Right lobe of liver (tissue), 6 donors: ENCODE measurements at regions of chr21 and their contacts with region 1.

Region 1: GRCh38 chr21:14686466-14687267 is 140.6 kb upstream of the SAMSN1 start:
- DNase-seq: no peak
- ATAC-seq: peak in 3 of 4 donors; percentile 22 to 49 (median 46)
- H3K4me3 ChIP-seq: no peak overlapping the region
- H3K27ac ChIP-seq: no peak overlapping the region
- H3K4me1 ChIP-seq: no peaks in the 10 kb centered on the region
- H3K27me3 ChIP-seq: no peaks in the 10 kb centered on the region
- CTCF ChIP-seq: no peak
- POLR2A ChIP-seq: no peak

Region 2: DNA sequence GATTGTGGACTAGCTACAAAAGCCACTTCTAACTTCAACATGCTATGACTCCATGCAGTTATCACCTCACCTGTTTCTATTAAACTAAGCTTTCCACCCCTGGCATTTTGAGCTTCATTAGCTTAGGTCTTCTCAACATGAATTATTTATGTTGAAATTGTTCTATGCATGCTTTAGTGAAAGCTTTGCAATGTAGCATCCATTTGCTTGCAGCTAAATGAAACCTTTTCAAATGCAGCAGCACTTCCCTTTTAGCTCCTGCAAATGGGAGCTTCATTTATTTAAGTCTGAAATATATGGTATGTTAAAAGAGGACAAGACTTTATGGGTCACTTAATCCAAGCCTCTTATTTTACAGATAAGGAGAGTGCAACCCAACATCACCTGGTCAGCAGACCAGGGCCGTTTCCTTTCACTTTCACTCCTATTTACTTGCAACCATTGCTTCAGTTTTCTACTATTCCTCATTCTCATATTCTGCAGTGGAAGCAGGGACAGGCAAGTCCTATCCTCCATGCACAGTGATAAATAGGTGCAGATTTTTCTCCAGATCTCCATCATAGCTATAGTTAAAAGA is 84.2 kb before region 1 on chr21:
- intact Hi-C with region 1: no loop called
- DNase-seq: no peak
- ATAC-seq: peak; percentile 40 to 69 (median 57)
- H3K4me3 ChIP-seq: no peak overlapping the region
- H3K27ac ChIP-seq: no peak overlapping the region
- H3K4me1 ChIP-seq: no peaks in the 10 kb centered on the region
- H3K27me3 ChIP-seq: no peaks in the 10 kb centered on the region
- CTCF ChIP-seq: no peak
- POLR2A ChIP-seq: no peak

Region 3: GRCh38 chr21:14620152-14620551 is 66.5 kb before region 1 on chr21:
- intact Hi-C with region 1: loop called in 1 of 2 experiments (anchors 10 kb)
- DNase-seq: no peak
- ATAC-seq: no peak
- H3K4me3 ChIP-seq: no peak overlapping the region
- H3K27ac ChIP-seq: no peak overlapping the region
- H3K4me1 ChIP-seq: no peaks in the 10 kb centered on the region
- H3K27me3 ChIP-seq: no peaks in the 10 kb centered on the region
- CTCF ChIP-seq: no peak
- POLR2A ChIP-seq: no peak